ENCODE measurements at regions of chr9 and their contacts with region 1.

Region 1: DNA sequence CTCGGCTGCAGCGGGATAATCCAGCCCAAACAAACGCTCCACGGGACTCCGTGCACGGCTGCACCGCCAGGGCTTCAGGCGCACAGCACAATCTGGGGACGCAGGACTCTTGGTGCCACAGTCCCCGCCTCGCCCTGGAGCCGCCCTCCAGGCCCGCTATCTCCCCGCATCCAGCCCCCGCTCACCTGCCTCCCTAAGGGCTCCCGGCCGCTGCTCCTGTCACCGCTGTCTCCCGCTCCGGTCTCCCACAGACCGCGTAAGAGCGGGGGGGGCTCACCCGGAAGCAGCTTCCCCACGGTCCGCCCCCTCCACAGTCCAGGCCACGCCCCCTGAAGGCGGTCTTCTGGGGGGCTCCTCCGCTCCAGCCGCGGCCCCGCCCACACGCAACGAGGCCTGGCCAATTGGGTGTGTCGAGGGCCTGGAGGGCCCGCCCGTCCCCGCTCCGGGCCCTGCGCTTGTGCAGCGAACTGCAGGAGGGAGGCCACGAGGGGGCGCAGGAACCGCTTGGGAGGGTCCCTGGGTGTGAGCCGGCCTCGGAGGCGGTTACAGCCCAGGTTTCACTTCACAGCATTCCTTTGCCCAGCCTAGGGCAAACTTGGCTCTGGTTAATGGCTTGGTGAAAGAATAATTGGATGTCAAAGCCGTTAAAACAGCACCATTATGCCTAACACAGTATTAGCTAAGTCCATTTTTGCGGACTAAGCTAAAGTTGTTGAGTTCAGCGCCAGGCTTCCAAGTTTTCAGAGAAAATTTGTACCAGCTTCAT is at the start of gene ALAD:
- DNase-seq: peak; percentile 98 to 100 (median 99)
- H3K4me3 ChIP-seq: peak within 1 kb of the TSS; percentile 34 to 96
- H3K4me3 Mint-ChIP-seq: peak within 1 kb of the TSS; percentile 91 to 98 (median 94)
- H3K27ac ChIP-seq: peak within 1 kb of the TSS; percentile 52
- H3K27ac Mint-ChIP-seq: peak within 1 kb of the TSS; percentile 77 to 94 (median 89)
- H3K4me1 ChIP-seq: peaks cover 16% of the 10 kb centered on the region
- H3K4me1 Mint-ChIP-seq: peaks cover 14 to 31% (median 23%) of the 10 kb centered on the region in 4 donors
- H3K27me3 ChIP-seq: no peaks in the 10 kb centered on the region
- H3K27me3 Mint-ChIP-seq: no peaks in the 10 kb centered on the region
- total RNA-seq, gene ALAD: 39.9 TPM

Region 2: DNA sequence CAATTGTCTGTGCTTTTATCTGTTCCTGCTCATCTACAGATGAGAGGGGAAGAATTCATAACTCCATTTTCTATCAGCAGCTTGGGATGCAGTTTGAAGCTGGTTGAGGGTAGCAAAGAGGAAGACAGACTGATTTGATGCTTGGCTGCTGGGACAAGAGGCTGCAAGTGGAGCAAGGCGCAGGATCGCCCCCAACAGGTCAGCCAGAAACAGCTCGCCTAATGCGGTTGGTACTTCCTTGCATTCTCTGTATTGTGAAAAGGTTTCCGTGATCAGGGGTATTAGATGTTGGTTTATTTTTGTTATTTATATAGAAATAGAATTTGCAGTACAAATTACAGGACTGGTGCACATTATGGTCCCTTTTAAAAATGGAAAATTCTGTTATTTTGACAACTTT is 429.8 kb before region 1 on chr9:
- CTCF ChIA-PET with region 1: no interaction called
- POLR2A ChIA-PET with region 1: no interaction called
- intact Hi-C with region 1: no loop called
- DNase-seq: no peak
- H3K4me3 ChIP-seq: no peak overlapping the region
- H3K4me3 Mint-ChIP-seq: no peak overlapping the region
- H3K27ac ChIP-seq: no peak overlapping the region
- H3K27ac Mint-ChIP-seq: no peak overlapping the region
- H3K4me1 ChIP-seq: no peaks in the 10 kb centered on the region
- H3K4me1 Mint-ChIP-seq: no peaks in the 10 kb centered on the region
- H3K27me3 ChIP-seq: no peaks in the 10 kb centered on the region
- H3K27me3 Mint-ChIP-seq: peaks cover 10 to 17% of the 10 kb centered on the region in 2 donors

Region 3: DNA sequence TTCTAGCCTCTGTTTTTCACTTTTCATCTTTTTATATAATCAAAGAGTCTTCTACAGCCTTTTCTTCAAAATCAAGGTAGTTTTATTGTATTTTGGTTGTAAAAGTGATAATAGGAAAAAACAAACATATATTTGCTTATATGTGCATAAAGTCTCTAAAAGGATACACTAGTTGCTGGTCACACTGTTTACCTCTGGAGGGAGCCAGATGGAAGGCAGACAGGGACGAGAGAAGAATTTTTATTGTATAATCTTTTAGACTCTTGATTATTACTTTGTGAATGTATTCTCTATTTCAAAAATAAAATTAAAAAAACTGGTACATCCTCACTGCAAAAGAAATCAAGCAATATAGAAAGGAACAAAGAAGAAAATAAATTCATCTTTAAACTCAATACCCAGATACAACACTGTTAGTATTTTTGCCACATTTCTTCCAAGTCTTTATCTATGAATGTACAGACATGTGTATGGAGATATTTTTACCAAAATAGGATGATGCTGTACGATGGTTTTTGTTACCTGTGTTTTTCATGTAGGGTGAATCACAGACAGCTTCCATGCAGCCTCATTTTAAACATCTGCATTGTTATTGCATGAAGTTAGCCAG is 91.9 kb before region 1 on chr9:
- CTCF ChIA-PET with region 1: interaction called, 4 read pairs
- POLR2A ChIA-PET with region 1: no interaction called
- intact Hi-C with region 1: loop called (anchors 1 kb)
- DNase-seq: peak in 4 of 5 donors; percentile 18 to 34 (median 26)
- H3K4me3 ChIP-seq: no peak overlapping the region
- H3K4me3 Mint-ChIP-seq: no peak overlapping the region
- H3K27ac ChIP-seq: no peak overlapping the region
- H3K27ac Mint-ChIP-seq: peak overlapping the region in 1 of 7 donors; percentile 48
- H3K4me1 ChIP-seq: no peaks in the 10 kb centered on the region
- H3K4me1 Mint-ChIP-seq: no peaks in the 10 kb centered on the region
- H3K27me3 ChIP-seq: no peaks in the 10 kb centered on the region
- H3K27me3 Mint-ChIP-seq: peaks cover 3% of the 10 kb centered on the region in 2 donors

Region 4: DNA sequence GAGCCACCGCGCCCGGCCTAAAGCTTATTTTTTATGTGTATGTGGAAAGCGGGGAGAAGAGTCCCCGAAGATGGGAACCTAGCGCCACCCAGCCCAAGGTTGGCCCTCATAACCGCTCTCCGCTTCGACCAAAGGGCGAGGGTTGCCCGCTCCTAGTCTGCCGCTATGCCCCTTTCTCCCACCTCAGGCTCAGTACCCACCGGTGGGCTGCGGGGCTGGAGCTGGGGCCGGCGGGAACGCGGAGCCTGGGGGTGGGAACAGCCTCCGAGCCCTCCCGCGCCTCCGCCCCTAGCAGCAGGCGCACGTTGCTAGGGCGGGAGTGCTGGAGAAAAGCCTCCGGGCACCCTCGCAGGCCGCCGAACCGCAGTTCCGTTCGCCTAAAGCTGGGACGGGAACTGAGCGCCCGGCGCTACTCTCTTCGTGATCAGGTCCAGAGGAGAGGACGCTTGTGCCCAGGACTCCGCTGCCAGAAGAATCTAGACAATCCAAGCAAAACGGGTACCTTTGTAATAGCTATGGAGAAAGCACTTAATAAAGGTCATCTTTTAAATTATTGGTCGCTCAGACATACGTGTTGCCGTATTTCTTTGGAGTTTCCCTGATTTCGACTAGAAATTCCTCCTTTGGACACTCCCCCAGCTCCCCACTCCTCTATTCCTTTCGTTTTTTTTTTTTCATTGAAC is 61.1 kb before region 1 on chr9 and contains the start of gene WDR31:
- CTCF ChIA-PET with region 1: interaction called, 12 read pairs
- POLR2A ChIA-PET with region 1: interaction called, 5 read pairs
- intact Hi-C with region 1: loop called (anchors 1 kb)
- DNase-seq: peak; percentile 61 to 78 (median 75)
- H3K4me3 ChIP-seq: peak within 1 kb of the TSS; percentile 8 to 79
- H3K4me3 Mint-ChIP-seq: peak within 1 kb of the TSS; percentile 82 to 92 (median 87)
- H3K27ac ChIP-seq: peak within 1 kb of the TSS; percentile 28
- H3K27ac Mint-ChIP-seq: peak within 1 kb of the TSS in 6 of 7 donors; percentile 51 to 73 (median 56)
- H3K4me1 ChIP-seq: peaks cover 10% of the 10 kb centered on the region
- H3K4me1 Mint-ChIP-seq: peaks cover 7 to 23% (median 15%) of the 10 kb centered on the region in 4 donors
- H3K27me3 ChIP-seq: no peaks in the 10 kb centered on the region
- H3K27me3 Mint-ChIP-seq: peaks cover 1 to 4% of the 10 kb centered on the region in 2 donors
- total RNA-seq, gene WDR31: 0.33 to 0.67 TPM

Region 5: GRCh38 chr9:113376634-113377567 is 24.3 kb before region 1 on chr9 and contains the start of gene HDHD3:
- CTCF ChIA-PET with region 1: interaction called, 11 read pairs
- POLR2A ChIA-PET with region 1: interaction called, 19 read pairs
- intact Hi-C with region 1: loop called (anchors 1 kb)
- DNase-seq: peak; percentile 78 to 81 (median 80)
- H3K4me3 ChIP-seq: peak within 1 kb of the TSS; percentile 57 to 92
- H3K4me3 Mint-ChIP-seq: peak within 1 kb of the TSS; percentile 88 to 93 (median 90)
- H3K27ac ChIP-seq: peak within 1 kb of the TSS; percentile 66
- H3K27ac Mint-ChIP-seq: peak within 1 kb of the TSS; percentile 74 to 96 (median 89)
- H3K4me1 ChIP-seq: peaks cover 13% of the 10 kb centered on the region
- H3K4me1 Mint-ChIP-seq: peaks cover 12 to 23% (median 17%) of the 10 kb centered on the region in 4 donors
- H3K27me3 ChIP-seq: no peaks in the 10 kb centered on the region
- H3K27me3 Mint-ChIP-seq: no peaks in the 10 kb centered on the region
- total RNA-seq, gene HDHD3: 29.9 to 32.8 TPM

Region 6: DNA sequence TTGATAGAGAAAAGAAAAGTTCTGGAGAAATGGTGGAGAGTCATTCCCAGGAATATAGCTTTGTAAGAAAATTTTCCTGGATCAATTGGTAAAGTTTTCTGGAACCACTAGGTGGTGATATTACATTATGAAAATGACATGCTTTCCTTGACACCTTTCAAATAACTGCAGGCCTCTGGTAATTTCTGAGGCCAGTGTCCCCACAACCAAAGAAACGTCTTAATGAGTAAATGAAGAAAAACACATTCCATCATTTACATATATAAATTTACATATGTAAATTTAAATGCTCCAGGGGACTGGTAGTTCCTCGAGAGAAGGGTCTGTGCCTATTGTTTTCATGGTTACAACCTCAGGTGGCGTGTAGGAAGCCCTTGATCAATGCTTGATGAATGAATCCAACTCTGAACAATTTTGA is 45.1 kb after region 1 on chr9:
- CTCF ChIA-PET with region 1: interaction called, 5 read pairs
- POLR2A ChIA-PET with region 1: no interaction called
- intact Hi-C with region 1: loop called (anchors 2 kb)
- DNase-seq: peak in 4 of 5 donors; percentile 38 to 53 (median 43)
- H3K4me3 ChIP-seq: no peak overlapping the region
- H3K4me3 Mint-ChIP-seq: no peak overlapping the region
- H3K27ac ChIP-seq: no peak overlapping the region
- H3K27ac Mint-ChIP-seq: no peak overlapping the region
- H3K4me1 ChIP-seq: no peaks in the 10 kb centered on the region
- H3K4me1 Mint-ChIP-seq: peaks cover 0 to 1% (median 0%) of the 10 kb centered on the region in 4 donors
- H3K27me3 ChIP-seq: no peaks in the 10 kb centered on the region
- H3K27me3 Mint-ChIP-seq: no peaks in the 10 kb centered on the region